Mammary epithelial cell (primary cell): ENCODE measurements at regions of chr12 and their contacts with region 1.

Region 1: GRCh38 chr12:107832441-107832840 is 57.9 kb downstream of the ASCL4 start:
- DNase-seq: no peak
- H3K4me3 ChIP-seq: no peak overlapping the region
- H3K27ac ChIP-seq: no peak overlapping the region
- H3K4me1 ChIP-seq: no peaks in the 10 kb centered on the region
- H3K27me3 ChIP-seq: peaks cover 7% of the 10 kb centered on the region
- CTCF ChIP-seq: no peak

Region 2: GRCh38 chr12:107554941-107555340 is 277.5 kb before region 1 on chr12:
- CTCF ChIA-PET with region 1: no interaction called
- dilution Hi-C with region 1: no loop called
- in situ Hi-C with region 1: no loop called
- intact Hi-C with region 1: no loop called
- DNase-seq: no peak
- H3K4me3 ChIP-seq: no peak overlapping the region
- H3K27ac ChIP-seq: no peak overlapping the region
- H3K4me1 ChIP-seq: peaks cover 2% of the 10 kb centered on the region
- H3K27me3 ChIP-seq: no peaks in the 10 kb centered on the region
- CTCF ChIP-seq: no peak

Region 3: GRCh38 chr12:107748472-107748871 is 84.0 kb before region 1 on chr12:
- CTCF ChIA-PET with region 1: no interaction called
- dilution Hi-C with region 1: no loop called
- in situ Hi-C with region 1: no loop called
- intact Hi-C with region 1: no loop called
- DNase-seq: peak; percentile 68
- H3K4me3 ChIP-seq: no peak overlapping the region
- H3K27ac ChIP-seq: peak overlapping the region; percentile 65
- H3K4me1 ChIP-seq: peaks cover 26% of the 10 kb centered on the region
- H3K27me3 ChIP-seq: no peaks in the 10 kb centered on the region
- CTCF ChIP-seq: no peak

Region 4: DNA sequence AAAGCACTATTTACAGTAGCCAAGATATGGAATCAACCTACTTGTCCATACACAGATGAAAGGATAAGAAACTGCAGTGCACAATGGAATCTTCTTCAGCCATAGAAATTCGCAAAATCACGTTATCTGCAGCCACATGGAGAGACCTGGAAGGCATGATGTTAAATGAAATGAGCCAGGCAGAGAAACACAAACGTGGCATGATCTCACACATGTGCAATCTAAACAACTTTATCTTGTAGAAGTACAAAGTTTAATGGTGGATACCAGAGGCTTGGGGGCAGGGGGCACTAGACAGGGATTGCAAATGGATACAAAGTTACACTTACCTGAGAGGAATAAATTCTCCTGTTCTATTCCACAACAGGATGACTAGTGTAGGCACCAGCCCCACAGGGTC is 33.9 kb before region 1 on chr12:
- CTCF ChIA-PET with region 1: no interaction called
- dilution Hi-C with region 1: loop called (anchors 5 kb)
- in situ Hi-C with region 1: no loop called
- intact Hi-C with region 1: no loop called
- DNase-seq: no peak
- H3K4me3 ChIP-seq: no peak overlapping the region
- H3K27ac ChIP-seq: no peak overlapping the region
- H3K4me1 ChIP-seq: no peaks in the 10 kb centered on the region
- H3K27me3 ChIP-seq: no peaks in the 10 kb centered on the region
- CTCF ChIP-seq: no peak

Region 5: GRCh38 chr12:107864235-107864634 is 31.8 kb after region 1 on chr12:
- CTCF ChIA-PET with region 1: no interaction called
- dilution Hi-C with region 1: no loop called
- in situ Hi-C with region 1: no loop called
- intact Hi-C with region 1: no loop called
- DNase-seq: no peak
- H3K4me3 ChIP-seq: no peak overlapping the region
- H3K27ac ChIP-seq: no peak overlapping the region
- H3K4me1 ChIP-seq: no peaks in the 10 kb centered on the region
- H3K27me3 ChIP-seq: peaks cover 5% of the 10 kb centered on the region
- CTCF ChIP-seq: no peak

Region 6: GRCh38 chr12:107938446-107938845 is 106.0 kb after region 1 on chr12:
- CTCF ChIA-PET with region 1: no interaction called
- dilution Hi-C with region 1: loop called (anchors 5 kb)
- in situ Hi-C with region 1: no loop called
- intact Hi-C with region 1: no loop called
- DNase-seq: no peak
- H3K4me3 ChIP-seq: no peak overlapping the region
- H3K27ac ChIP-seq: no peak overlapping the region
- H3K4me1 ChIP-seq: no peaks in the 10 kb centered on the region
- H3K27me3 ChIP-seq: peaks cover 3% of the 10 kb centered on the region
- CTCF ChIP-seq: no peak